H1 (cell line): ENCODE measurements at regions of chr20 and their contacts with region 1.

Region 1: GRCh38 chr20:3563548-3564177 is 92.8 kb downstream of the ATRN start:
- DNase-seq: no peak
- H3K4me3 ChIP-seq: no peak overlapping the region
- H3K27ac ChIP-seq: peak overlapping the region; percentile 8; the same call in 1 of the 2 replicates
- H3K4me1 ChIP-seq: no peaks in the 10 kb centered on the region; a peak in 1 of 7 replicates
- H3K27me3 ChIP-seq: no peaks in the 10 kb centered on the region
- CTCF ChIP-seq: peak in 2 of 3 experiments; percentile 67 to 75; a peak in 3 of 4 replicates
- EP300 ChIP-seq: no peak
- POLR2A ChIP-seq: no peak
- RAD21 ChIP-seq: peak; percentile 82 to 86

Region 2: DNA sequence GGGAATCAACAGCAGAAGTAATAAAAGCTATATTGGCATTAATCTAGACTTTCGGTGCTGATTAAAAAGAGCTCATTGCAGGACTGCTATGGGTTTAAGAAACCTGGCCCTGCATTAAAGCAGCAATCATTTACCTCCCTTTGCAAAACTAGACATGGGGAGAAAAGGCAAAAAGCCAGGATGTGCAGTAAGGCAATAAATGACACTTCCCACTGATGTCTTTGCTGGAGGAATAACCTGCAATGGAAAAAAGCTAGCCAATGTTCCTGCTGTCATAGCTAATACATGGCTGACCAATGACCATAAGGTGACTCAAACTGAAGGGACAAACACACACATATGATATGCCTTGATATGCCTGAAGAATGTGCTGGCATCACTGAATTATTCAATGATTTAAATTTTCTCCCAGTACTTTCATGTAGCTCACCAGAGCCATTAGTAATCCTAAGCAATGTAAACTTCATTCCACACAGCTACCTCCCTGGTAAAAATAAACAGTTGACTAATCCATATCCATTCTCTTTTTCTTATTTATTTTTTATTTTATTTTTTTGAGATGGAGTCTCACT is 164.9 kb before region 1 on chr20:
- CTCF ChIA-PET with region 1: no interaction called
- POLR2A ChIA-PET with region 1: no interaction called
- DNase-seq: no peak
- H3K4me3 ChIP-seq: no peak overlapping the region
- H3K27ac ChIP-seq: no peak overlapping the region
- H3K4me1 ChIP-seq: no peaks in the 10 kb centered on the region
- H3K27me3 ChIP-seq: no peaks in the 10 kb centered on the region
- CTCF ChIP-seq: no peak
- EP300 ChIP-seq: no peak
- POLR2A ChIP-seq: no peak
- RAD21 ChIP-seq: no peak

Region 3: DNA sequence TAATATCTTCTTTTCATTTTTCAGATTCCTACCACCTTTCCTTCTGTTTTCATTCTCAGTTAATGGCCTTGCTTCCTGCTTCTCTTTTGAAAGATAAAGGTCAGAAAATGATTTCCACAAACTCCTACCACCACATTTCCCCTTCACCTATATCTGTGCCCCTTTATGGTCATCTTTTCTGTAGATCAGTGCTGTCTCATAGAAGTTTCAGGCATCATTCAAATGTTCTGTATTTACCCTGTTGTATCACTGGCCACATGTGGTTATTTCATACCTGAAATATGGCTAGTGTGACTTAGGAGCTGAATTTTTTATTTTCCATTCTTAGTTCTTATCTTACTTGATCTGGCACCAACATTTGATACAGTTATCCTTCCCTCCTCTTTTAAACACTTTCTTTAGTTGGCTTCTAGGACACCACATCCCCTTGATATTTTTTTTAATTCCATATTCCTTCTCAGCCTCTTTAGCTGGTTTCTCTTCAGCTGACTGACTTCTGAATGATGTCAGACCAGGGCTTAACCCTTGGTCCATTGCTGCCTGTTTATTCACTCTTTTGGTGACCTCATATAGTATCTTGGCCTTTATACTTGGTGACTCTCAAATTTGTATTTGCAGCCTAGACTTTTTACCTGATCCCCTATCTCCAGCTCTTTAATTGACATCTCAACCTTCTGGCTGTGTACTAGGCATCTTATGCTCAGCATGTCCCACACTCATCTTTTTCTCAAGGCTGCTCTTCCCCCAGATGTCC is 11.8 kb before region 1 on chr20:
- CTCF ChIA-PET with region 1: interaction called, 22 read pairs
- POLR2A ChIA-PET with region 1: no interaction called
- DNase-seq: no peak
- H3K4me3 ChIP-seq: no peak overlapping the region
- H3K27ac ChIP-seq: no peak overlapping the region
- H3K4me1 ChIP-seq: no peaks in the 10 kb centered on the region
- H3K27me3 ChIP-seq: no peaks in the 10 kb centered on the region
- CTCF ChIP-seq: no peak
- EP300 ChIP-seq: no peak
- POLR2A ChIP-seq: no peak
- RAD21 ChIP-seq: no peak

Region 4: DNA sequence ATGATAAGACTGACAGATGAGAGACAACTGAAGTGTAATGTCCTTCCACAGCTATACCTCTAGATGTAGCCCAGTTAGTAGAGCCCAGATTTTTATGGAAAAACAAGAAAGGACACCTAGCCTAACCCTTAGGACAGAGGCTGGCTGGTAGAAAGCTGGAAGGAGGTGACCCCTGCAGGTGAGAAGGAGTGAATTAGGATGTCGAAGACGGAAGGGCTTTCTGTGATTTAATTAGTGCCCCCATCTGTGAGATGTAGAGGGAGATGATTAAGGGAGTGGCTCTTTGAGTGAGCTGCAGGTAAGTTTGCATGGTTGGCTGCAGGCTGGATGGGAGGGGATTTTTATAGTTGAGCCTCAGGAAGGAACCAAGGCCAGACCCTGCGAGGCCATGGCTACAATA is 16.7 kb after region 1 on chr20:
- CTCF ChIA-PET with region 1: interaction called, 15 read pairs
- POLR2A ChIA-PET with region 1: no interaction called
- DNase-seq: no peak
- H3K4me3 ChIP-seq: no peak overlapping the region
- H3K27ac ChIP-seq: no peak overlapping the region
- H3K4me1 ChIP-seq: no peaks in the 10 kb centered on the region
- H3K27me3 ChIP-seq: no peaks in the 10 kb centered on the region
- CTCF ChIP-seq: peak in 2 of 3 experiments; percentile 36 to 53; a peak in 2 of 4 replicates
- EP300 ChIP-seq: no peak
- POLR2A ChIP-seq: no peak
- RAD21 ChIP-seq: peak; percentile 50 to 58; a peak in 3 of 4 replicates

Region 5: GRCh38 chr20:3616250-3616649 is 52.6 kb after region 1 on chr20:
- CTCF ChIA-PET with region 1: interaction called, 11 read pairs
- POLR2A ChIA-PET with region 1: no interaction called
- DNase-seq: no peak
- H3K4me3 ChIP-seq: no peak overlapping the region
- H3K27ac ChIP-seq: no peak overlapping the region
- H3K4me1 ChIP-seq: no peaks in the 10 kb centered on the region
- H3K27me3 ChIP-seq: no peaks in the 10 kb centered on the region
- CTCF ChIP-seq: no peak
- EP300 ChIP-seq: no peak
- POLR2A ChIP-seq: no peak
- RAD21 ChIP-seq: no peak

Region 6: GRCh38 chr20:3635346-3635745 is 71.7 kb after region 1 on chr20:
- CTCF ChIA-PET with region 1: interaction called, 12 read pairs
- POLR2A ChIA-PET with region 1: no interaction called
- DNase-seq: no peak
- H3K4me3 ChIP-seq: no peak overlapping the region
- H3K27ac ChIP-seq: no peak overlapping the region
- H3K4me1 ChIP-seq: peaks cover 0 to 1% (median 0%) of the 10 kb centered on the region in 4 experiments; a peak in 2 of 7 replicates
- H3K27me3 ChIP-seq: no peaks in the 10 kb centered on the region
- CTCF ChIP-seq: no peak
- EP300 ChIP-seq: no peak
- POLR2A ChIP-seq: no peak
- RAD21 ChIP-seq: no peak

Region 7: DNA sequence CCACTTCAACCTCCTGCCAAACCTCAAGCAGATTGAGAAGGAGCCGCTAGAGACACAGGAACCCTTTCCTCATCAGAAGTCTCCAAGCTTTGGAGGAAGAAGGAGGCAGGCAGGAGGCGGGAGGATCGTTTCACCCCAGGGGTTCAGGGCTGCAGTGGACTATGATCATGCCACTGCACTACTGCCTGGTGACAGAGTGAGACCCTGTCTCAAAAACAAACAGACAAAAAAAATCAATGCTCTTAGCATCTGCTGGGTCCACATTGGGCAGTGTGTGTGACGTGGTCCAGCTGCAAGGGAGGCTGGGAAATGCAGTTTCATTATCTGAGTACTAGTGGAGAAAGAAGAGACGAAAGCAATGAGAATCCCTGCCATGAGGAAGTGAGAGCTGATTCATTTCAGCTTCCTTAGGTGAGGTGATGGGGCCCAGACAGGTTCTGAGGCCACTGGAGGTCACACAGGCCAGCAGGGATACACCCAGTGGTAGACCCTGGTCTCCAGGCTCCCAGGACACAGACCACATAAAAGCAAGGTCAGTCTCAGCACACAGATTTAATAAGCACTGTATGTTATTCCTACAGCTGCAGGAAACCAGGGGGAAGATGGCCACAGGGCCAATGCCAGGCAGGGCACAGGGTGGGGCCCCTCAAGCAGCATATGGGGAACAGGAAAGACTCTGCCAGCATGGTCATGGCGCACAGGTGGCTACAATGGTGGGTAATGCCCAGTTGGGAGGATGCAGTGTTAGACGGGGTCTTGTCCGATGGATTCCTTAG is 95.2 kb after region 1 on chr20:
- CTCF ChIA-PET with region 1: interaction called, 14 read pairs
- POLR2A ChIA-PET with region 1: no interaction called
- DNase-seq: no peak
- H3K4me3 ChIP-seq: no peak overlapping the region
- H3K27ac ChIP-seq: no peak overlapping the region
- H3K4me1 ChIP-seq: peaks cover 0 to 4% (median 0%) of the 10 kb centered on the region in 4 experiments; a peak in 3 of 7 replicates
- H3K27me3 ChIP-seq: peaks cover 0 to 2% (median 0%) of the 10 kb centered on the region in 4 experiments; a peak in 1 of 7 replicates
- CTCF ChIP-seq: no peak
- EP300 ChIP-seq: no peak
- POLR2A ChIP-seq: no peak
- RAD21 ChIP-seq: no peak

Region 8: GRCh38 chr20:3710703-3711483 is 147.2 kb after region 1 on chr20:
- CTCF ChIA-PET with region 1: interaction called, 16 read pairs
- POLR2A ChIA-PET with region 1: no interaction called
- DNase-seq: peak; percentile 33 to 99
- H3K4me3 ChIP-seq: no peak overlapping the region
- H3K27ac ChIP-seq: no peak overlapping the region
- H3K4me1 ChIP-seq: no peaks in the 10 kb centered on the region
- H3K27me3 ChIP-seq: no peaks in the 10 kb centered on the region; a peak in 1 of 7 replicates
- CTCF ChIP-seq: peak; percentile 88 to 98 (median 91)
- EP300 ChIP-seq: no peak
- POLR2A ChIP-seq: no peak
- RAD21 ChIP-seq: peak; percentile 88 to 93

Region 9: DNA sequence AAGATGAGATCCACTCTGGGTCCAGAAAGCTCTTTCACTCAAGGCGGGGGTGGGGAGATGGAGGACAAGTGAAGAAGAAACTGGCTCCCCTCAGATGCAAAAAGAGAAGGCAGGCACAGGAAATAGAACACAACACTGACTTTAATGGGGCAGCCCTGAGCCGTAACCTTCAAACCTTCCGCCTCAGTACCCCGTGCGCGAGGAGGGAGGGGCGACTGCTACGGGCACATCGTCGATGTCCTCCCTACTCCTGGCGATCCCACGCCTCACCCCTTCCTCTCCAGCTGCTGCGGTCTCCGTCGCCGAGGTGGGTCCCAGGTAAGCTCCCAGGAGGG is 213.7 kb after region 1 on chr20:
- CTCF ChIA-PET with region 1: no interaction called
- POLR2A ChIA-PET with region 1: no interaction called
- DNase-seq: no peak
- H3K4me3 ChIP-seq: peak overlapping the region; percentile 46 to 81 (median 62)
- H3K27ac ChIP-seq: no peak overlapping the region
- H3K4me1 ChIP-seq: peaks cover 0 to 11% (median 9%) of the 10 kb centered on the region in 4 experiments; a peak in 6 of 7 replicates
- H3K27me3 ChIP-seq: peaks cover 0 to 30% (median 26%) of the 10 kb centered on the region in 4 experiments; a peak in 6 of 7 replicates
- CTCF ChIP-seq: no peak
- EP300 ChIP-seq: no peak
- POLR2A ChIP-seq: no peak
- RAD21 ChIP-seq: no peak